Calu3 (cell line): ENCODE measurements at regions of chr12 and their contacts with region 1.

Region 1: DNA sequence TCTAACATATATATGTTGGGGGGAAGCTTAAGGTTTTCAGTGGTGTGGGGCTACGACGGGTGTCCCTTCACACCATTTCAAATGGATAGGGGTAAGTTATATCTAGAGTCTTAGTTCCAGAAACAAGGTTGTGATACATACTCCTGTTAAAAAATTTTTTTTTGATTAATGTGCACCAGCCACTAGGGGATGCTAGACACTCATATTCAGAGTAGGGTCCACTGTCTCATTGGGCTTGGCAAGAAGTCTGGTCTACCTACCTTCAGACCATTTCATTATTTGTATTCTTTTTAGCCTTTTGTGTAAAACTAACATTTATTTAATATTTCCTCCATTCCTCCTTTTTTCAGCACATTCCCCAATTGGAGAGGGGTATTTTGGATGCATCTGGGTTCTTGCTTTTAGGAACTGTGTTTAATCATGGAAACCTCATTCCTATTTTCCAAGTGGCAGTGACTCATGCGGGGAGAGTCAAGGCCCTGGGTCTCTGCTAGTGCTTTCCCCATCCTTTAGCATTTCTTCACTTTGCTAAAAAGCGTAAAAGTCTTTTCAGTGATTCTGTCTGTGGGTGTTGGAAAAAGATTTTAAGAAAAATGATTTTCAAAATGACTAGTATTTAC is 33.4 kb downstream of the ANO4 start:
- DNase-seq: peak; percentile 51
- H3K4me3 Mint-ChIP-seq: no peak overlapping the region
- H3K27ac Mint-ChIP-seq: no peak overlapping the region
- H3K4me1 Mint-ChIP-seq: peaks cover 12% of the 10 kb centered on the region
- H3K27me3 Mint-ChIP-seq: no peaks in the 10 kb centered on the region
- CTCF ChIP-seq: peak; percentile 81

Region 2: GRCh38 chr12:100767950-100768349 is 60.1 kb before region 1 on chr12:
- CTCF ChIA-PET with region 1: no interaction called
- intact Hi-C with region 1: loop called (anchors 10 kb)
- DNase-seq: no peak
- H3K4me3 Mint-ChIP-seq: no peak overlapping the region
- H3K27ac Mint-ChIP-seq: no peak overlapping the region
- H3K4me1 Mint-ChIP-seq: no peaks in the 10 kb centered on the region
- H3K27me3 Mint-ChIP-seq: no peaks in the 10 kb centered on the region
- CTCF ChIP-seq: no peak

Region 3: GRCh38 chr12:100987552-100988521 is 159.8 kb after region 1 on chr12:
- CTCF ChIA-PET with region 1: no interaction called
- intact Hi-C with region 1: loop called (anchors 1 kb)
- DNase-seq: peak; percentile 72
- H3K4me3 Mint-ChIP-seq: no peak overlapping the region
- H3K27ac Mint-ChIP-seq: peak overlapping the region; percentile 12
- H3K4me1 Mint-ChIP-seq: peaks cover 10% of the 10 kb centered on the region
- H3K27me3 Mint-ChIP-seq: no peaks in the 10 kb centered on the region
- CTCF ChIP-seq: peak; percentile 22

Region 4: DNA sequence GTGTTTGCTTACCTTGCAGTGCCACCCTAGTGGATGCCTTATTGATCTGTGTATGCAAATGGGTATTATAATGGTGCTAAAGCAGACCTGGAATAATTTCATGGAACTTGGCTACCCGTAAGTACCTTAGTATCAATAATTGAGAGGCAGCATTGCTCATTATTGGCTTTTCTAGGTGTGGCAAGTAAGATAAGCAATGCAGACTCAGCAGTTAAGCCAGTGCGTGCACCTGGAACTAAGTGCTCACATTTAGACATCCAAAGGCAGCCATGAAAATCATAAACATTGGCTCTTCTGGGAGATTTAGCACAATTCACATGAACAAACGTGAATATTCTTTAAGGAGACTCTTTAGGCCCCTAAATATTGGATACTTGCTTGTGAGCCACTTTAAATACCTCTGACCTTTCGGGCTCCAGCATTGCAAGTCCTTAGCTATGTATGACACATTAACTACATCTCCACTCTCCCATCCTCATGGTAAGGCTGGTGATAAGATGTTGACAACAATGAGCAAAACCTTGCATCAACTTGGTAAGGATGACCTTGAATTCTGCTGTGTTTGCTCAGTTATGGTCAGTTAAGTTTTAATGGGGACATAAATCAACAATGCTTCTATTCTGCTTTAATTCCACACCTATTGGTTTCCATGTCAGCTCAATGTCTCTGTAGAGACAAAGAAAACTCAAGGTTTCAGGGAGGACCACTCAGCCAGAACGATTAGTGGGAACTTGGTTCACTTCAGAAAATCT is 270.0 kb after region 1 on chr12:
- CTCF ChIA-PET with region 1: no interaction called
- intact Hi-C with region 1: loop called (anchors 5 kb)
- DNase-seq: no peak
- H3K4me3 Mint-ChIP-seq: no peak overlapping the region
- H3K27ac Mint-ChIP-seq: no peak overlapping the region
- H3K4me1 Mint-ChIP-seq: peaks cover 21% of the 10 kb centered on the region
- H3K27me3 Mint-ChIP-seq: no peaks in the 10 kb centered on the region
- CTCF ChIP-seq: no peak

Region 5: DNA sequence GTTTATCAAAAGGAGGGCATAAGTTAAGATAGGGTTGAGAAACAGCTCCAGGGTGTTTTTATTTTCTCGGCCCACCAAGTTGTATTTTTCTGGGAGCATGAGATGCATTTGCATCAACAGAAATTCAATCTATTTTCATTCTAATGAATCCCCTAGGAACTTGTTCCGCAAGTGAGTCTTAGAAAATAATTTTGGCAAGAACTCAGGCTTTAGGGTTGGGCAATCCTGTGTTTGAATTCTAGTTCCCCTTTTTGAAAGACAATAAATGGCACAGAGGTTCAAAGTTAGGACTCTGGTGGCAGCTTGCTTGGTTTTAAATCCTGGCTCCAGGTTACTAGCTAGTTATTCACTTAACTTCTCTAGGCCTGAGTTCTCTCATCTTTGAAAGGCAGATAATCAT is 358.3 kb after region 1 on chr12:
- CTCF ChIA-PET with region 1: no interaction called
- intact Hi-C with region 1: loop called (anchors 10 kb)
- DNase-seq: no peak
- H3K4me3 Mint-ChIP-seq: no peak overlapping the region
- H3K27ac Mint-ChIP-seq: no peak overlapping the region
- H3K4me1 Mint-ChIP-seq: no peaks in the 10 kb centered on the region
- H3K27me3 Mint-ChIP-seq: no peaks in the 10 kb centered on the region
- CTCF ChIP-seq: no peak

Region 6: DNA sequence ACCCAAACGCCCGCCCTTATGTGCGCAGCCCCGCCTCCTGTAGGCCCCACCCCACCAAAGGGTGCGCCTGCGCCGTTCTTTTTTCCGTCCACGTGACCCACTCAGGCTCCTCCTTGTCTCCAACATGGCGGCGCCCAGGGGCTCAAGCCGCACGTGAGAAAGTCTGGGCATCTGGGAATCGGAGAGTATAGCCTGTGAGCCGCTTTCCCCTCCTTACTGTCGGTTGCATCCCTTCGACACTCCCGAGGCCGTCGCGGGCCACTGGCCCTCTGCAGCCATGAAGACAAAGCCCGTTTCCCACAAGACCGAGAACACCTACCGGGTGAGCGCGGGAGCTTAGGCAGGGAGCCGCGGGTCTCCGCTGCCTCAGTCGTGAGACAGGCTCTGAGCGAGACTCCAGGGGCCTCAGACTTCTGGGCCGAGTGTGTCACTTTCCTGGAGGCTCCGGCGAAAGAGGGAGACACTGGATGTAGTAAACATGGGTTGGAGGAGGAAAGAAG is 452.0 kb after region 1 on chr12 and contains the start of gene UTP20:
- CTCF ChIA-PET with region 1: interaction called, 3 read pairs
- intact Hi-C with region 1: loop called (anchors 5 kb)
- DNase-seq: peak; percentile 97
- H3K4me3 Mint-ChIP-seq: peak within 1 kb of the TSS; percentile 92
- H3K27ac Mint-ChIP-seq: peak within 1 kb of the TSS; percentile 91
- H3K4me1 Mint-ChIP-seq: peaks cover 30% of the 10 kb centered on the region
- H3K27me3 Mint-ChIP-seq: no peaks in the 10 kb centered on the region
- CTCF ChIP-seq: no peak
- total RNA-seq, gene UTP20: 36.6 and 42.2 TPM in 2 replicates

Region 7: DNA sequence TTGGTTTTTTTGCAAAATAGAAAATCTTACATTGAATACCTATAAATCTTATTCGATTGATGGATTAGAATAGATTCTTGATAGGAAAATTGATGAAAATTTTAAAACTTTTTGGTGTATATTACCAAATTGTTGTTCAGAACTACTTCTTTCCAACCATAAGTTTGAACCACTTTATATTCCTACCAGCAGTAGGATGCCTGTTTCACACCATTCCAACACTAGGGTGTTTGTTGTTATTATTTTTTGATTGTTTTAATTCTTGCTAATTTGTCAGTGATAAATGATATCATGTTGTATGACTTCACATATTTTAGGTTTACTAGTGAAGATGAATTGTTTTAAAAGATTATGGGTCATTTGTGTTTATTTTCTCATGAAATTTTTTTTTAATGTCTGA is 495.2 kb after region 1 on chr12:
- CTCF ChIA-PET with region 1: interaction called, 5 read pairs
- intact Hi-C with region 1: loop called (anchors 1 kb)
- DNase-seq: no peak
- H3K4me3 Mint-ChIP-seq: no peak overlapping the region
- H3K27ac Mint-ChIP-seq: no peak overlapping the region
- H3K4me1 Mint-ChIP-seq: no peaks in the 10 kb centered on the region
- H3K27me3 Mint-ChIP-seq: no peaks in the 10 kb centered on the region
- CTCF ChIP-seq: no peak